ENCODE measurements at regions of chr16 and their contacts with region 1.

Region 1: DNA sequence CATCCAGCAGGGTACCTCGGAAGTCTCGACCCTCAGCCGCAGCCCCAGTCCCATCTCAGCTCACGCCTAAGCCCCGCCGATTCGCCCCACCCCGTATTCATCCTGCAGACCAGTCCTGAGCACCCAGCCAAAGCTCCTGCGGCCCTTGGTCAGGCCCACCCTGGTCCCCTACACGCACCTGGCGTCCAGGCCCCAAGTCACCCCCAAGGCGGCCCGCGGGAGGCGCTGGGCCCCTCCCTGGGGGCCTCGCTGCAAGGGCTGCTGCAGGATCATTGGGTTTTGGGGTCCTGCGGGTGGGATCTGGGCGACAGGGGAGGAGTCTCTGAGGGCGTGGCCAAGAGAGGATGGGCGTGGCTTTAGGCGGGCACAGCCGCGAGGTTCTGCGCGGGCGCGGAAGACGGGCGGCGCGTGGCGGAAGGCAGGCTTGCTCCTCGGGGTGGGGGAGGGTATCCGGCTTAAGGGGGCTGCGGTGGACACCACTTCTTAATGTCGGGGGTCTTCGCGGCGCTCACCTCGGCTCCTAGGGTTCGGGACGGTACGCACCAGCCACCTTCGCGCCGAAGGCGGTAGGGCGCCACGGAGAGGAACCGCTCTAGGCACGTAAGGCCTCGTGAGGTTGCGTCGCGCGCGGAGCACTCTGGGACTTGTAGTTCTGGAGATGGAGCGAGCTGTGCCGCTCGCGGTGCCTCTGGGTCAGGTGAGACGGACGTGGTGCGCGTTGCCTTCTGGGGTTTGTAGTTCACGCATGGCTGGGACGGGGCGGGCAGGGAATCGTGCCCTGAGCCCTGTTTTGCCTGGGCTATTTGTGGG is at the starts of genes HCFC1R1 and THOC6:
- DNase-seq: peak; percentile 98
- ATAC-seq: peak; percentile 80
- H3K4me3 Mint-ChIP-seq: peak within 1 kb of the TSS; percentile 75
- H3K27ac Mint-ChIP-seq: peak within 1 kb of the TSS; percentile 92
- H3K4me1 Mint-ChIP-seq: peaks cover 53% of the 10 kb centered on the region
- H3K27me3 Mint-ChIP-seq: peaks cover 7% of the 10 kb centered on the region
- total RNA-seq, gene HCFC1R1: 31.8 to 34.3 TPM
- total RNA-seq, gene THOC6: 45.6 to 51.5 TPM

Region 2: GRCh38 chr16:2980227-2981086 is 43.4 kb before region 1 on chr16 and contains the start of gene PKMYT1:
- CTCF ChIA-PET with region 1: interaction called, 10 read pairs
- DNase-seq: peak; percentile 96
- ATAC-seq: peak; percentile 90
- H3K4me3 Mint-ChIP-seq: peak within 1 kb of the TSS; percentile 93
- H3K27ac Mint-ChIP-seq: peak within 1 kb of the TSS; percentile 86
- H3K4me1 Mint-ChIP-seq: peaks cover 33% of the 10 kb centered on the region
- H3K27me3 Mint-ChIP-seq: peaks cover 4% of the 10 kb centered on the region
- total RNA-seq, gene PKMYT1: 146 to 199 TPM

Region 3: GRCh38 chr16:3038256-3038655 is 14.4 kb after region 1 on chr16:
- CTCF ChIA-PET with region 1: interaction called, 342 read pairs
- DNase-seq: no peak
- ATAC-seq: no peak
- H3K4me3 Mint-ChIP-seq: no peak overlapping the region
- H3K27ac Mint-ChIP-seq: no peak overlapping the region
- H3K4me1 Mint-ChIP-seq: peaks cover 8% of the 10 kb centered on the region
- H3K27me3 Mint-ChIP-seq: peaks cover 61% of the 10 kb centered on the region

Region 4: GRCh38 chr16:3059000-3059722 is 35.3 kb after region 1 on chr16:
- CTCF ChIA-PET with region 1: interaction called, 52 read pairs
- DNase-seq: peak; percentile 92
- ATAC-seq: peak; percentile 76
- H3K4me3 Mint-ChIP-seq: peak overlapping the region; percentile 81
- H3K27ac Mint-ChIP-seq: peak overlapping the region; percentile 90
- H3K4me1 Mint-ChIP-seq: peaks cover 71% of the 10 kb centered on the region
- H3K27me3 Mint-ChIP-seq: no peaks in the 10 kb centered on the region

Region 5: GRCh38 chr16:3099732-3100499 is 76.0 kb after region 1 on chr16:
- CTCF ChIA-PET with region 1: interaction called, 36 read pairs
- DNase-seq: peak; percentile 97
- ATAC-seq: peak; percentile 93
- H3K4me3 Mint-ChIP-seq: peak overlapping the region; percentile 74
- H3K27ac Mint-ChIP-seq: peak overlapping the region; percentile 80
- H3K4me1 Mint-ChIP-seq: peaks cover 51% of the 10 kb centered on the region
- H3K27me3 Mint-ChIP-seq: no peaks in the 10 kb centered on the region

Region 6: DNA sequence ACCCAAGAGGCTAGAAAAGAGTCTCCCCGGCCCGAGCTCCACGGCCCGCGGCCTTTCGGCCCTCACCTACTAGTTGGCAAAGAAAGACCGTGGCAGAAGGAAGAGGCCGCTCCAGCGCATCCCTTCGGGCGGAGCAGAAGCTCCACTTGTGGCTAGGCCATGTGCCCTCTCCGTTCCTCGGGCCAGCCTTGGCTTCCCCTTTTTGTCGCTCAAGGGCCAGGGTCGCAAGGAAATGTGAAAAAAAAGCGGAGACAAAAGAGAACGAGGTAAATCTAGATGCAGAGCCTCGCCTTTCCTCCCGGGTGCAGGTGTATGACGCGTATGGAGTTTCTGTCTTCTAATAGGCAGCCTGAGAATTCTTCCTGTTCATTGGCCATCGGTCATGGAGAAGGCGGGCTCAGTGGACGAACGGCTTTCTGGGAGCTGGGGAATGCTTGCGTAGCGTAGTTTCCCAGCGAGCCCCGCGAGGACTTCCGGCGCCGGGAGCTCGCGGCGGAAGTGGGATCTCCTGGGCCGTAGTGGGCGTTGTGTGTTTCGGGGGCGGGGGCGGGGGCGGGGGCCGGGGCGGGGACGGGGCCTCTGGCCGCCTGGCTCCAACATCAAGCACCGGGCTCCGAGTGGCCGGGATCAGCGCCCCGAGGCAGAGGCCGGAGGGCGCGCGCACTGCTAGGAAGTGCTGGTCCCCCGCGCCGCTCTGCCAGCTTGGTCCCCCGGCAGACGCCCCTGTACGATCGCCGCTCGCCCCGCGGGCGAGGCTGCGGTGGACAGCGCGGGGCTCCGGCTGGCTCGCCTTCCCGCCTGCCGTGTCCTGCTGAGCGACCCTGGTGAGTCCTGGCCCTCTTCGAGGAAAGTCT is 110.9 kb after region 1 on chr16 and contains the start of gene ZNF213:
- CTCF ChIA-PET with region 1: interaction called, 185 read pairs
- DNase-seq: peak; percentile 98
- ATAC-seq: peak; percentile 95
- H3K4me3 Mint-ChIP-seq: peak within 1 kb of the TSS; percentile 93
- H3K27ac Mint-ChIP-seq: peak within 1 kb of the TSS; percentile 97
- H3K4me1 Mint-ChIP-seq: peaks cover 32% of the 10 kb centered on the region
- H3K27me3 Mint-ChIP-seq: no peaks in the 10 kb centered on the region
- total RNA-seq, gene ZNF213: 10.6 to 12.3 TPM

Region 7: GRCh38 chr16:3158471-3159314 is 134.8 kb after region 1 on chr16:
- CTCF ChIA-PET with region 1: interaction called, 10 read pairs
- DNase-seq: peak; percentile 96
- ATAC-seq: peak; percentile 88
- H3K4me3 Mint-ChIP-seq: peak overlapping the region; percentile 83
- H3K27ac Mint-ChIP-seq: peak overlapping the region; percentile 92
- H3K4me1 Mint-ChIP-seq: peaks cover 43% of the 10 kb centered on the region
- H3K27me3 Mint-ChIP-seq: peaks cover 25% of the 10 kb centered on the region

Region 8: DNA sequence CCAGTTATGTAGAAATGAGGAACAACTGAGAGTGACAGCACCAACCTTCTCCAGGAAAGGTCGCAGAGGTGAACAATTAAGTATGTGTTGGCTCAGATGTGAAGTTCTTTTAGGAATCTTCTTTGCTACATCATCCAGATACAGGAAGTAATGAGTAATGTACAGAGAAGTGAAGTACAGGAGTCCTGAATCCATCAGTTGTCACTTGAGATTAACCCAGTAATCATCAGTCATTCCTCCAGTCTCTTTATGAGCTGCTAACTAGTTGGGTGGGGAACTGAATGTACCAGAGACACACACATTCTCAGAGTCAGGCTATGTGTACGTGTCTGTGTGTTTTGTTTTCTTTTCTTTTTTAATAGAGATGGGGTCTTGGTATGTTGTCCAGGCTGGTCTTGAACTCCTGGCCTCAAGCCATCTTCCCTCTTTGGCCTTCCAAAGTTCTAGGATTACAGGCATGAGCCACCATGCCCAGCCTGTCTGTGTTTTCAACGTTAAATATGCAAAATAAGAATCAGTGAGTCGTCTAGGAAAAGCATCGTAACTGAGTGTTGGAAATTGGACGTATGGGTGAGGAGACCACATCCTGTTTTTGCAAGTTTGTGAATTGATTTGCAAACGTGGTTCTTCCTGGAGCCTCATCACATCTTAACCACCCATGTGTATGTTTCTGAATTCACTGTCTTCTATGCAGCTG is 191.2 kb after region 1 on chr16:
- CTCF ChIA-PET with region 1: no interaction called
- DNase-seq: peak; percentile 64
- ATAC-seq: peak; percentile 84
- H3K4me3 Mint-ChIP-seq: peak overlapping the region; percentile 6
- H3K27ac Mint-ChIP-seq: peak overlapping the region; percentile 84
- H3K4me1 Mint-ChIP-seq: peaks cover 34% of the 10 kb centered on the region
- H3K27me3 Mint-ChIP-seq: no peaks in the 10 kb centered on the region